ENCODE measurements at regions of chr17 and their contacts with region 1.

Region 1: DNA sequence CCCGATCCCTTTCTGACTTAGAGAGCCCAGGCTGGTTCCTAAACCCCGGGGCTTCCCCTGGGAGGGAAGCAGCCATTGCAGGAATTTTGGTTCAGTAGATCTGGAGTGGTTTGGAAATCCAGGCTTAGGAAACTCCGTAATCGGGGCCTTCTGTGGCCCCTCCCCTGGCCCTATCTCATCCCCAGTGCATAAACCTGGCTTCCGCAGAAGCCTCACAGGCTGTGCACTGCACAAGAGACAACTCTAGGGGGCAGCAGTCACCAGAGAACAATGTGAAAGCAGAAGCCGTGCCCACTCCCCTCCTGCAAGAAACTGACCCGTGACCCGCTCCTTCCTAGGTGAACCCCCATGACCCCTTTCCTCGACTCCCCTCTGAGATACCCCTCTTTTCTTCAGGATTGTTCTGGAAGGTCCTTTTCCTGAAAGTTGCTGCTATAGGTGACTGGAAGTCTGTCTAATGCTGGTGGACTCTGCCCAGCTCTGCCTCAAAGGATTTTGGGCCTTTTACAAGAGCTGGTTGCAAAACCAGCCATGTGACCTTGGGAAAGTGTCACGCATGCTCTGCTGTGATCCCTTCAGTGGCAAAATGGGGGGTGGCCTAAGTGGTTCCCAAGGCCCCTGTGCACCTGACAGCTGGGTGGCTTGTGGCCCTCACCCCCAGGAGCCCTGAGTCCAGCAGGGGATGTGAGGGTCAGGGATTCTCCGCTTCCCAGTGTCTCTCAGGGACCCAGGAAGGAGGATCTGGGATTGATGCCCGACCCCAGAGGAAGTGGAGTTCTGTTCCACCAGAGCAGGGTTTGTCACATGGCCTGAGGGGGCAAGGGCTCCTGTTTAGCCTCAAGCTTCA is 14.4 kb downstream of the GUCY2D start:
- DNase-seq: peak; percentile 80
- ATAC-seq: peak; percentile 91
- H3K4me3 Mint-ChIP-seq: peak overlapping the region; percentile 60
- H3K27ac Mint-ChIP-seq: no peak overlapping the region
- H3K4me1 Mint-ChIP-seq: peaks cover 5% of the 10 kb centered on the region
- H3K27me3 Mint-ChIP-seq: peaks cover 6% of the 10 kb centered on the region

Region 2: GRCh38 chr17:7951143-7951803 is 65.6 kb before region 1 on chr17:
- CTCF ChIA-PET with region 1: no interaction called
- POLR2A ChIA-PET with region 1: no interaction called
- intact Hi-C with region 1: no loop called
- DNase-seq: peak; percentile 71
- ATAC-seq: peak; percentile 97
- H3K4me3 Mint-ChIP-seq: peak overlapping the region; percentile 4
- H3K27ac Mint-ChIP-seq: peak overlapping the region; percentile 83
- H3K4me1 Mint-ChIP-seq: peaks cover 22% of the 10 kb centered on the region
- H3K27me3 Mint-ChIP-seq: no peaks in the 10 kb centered on the region

Region 3: DNA sequence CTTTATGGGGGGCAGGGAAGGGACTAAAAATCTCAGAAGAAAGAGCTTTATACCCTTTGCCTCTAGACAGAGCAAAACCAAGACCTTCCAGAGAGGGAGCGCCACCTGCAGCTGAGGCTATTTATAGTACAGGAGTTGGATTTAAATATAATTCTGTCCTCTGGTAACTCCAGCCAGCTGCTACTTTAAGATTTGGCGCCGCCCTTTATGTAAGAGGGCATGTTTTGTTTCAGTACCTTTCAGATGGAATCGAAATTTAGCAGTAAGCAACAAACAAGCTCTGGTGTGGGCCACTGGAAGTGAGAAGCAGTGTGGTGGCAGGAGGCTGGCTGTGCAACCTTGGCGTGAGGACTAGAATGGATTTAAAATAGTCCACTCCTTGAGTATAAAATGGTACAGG is 19.7 kb before region 1 on chr17:
- CTCF ChIA-PET with region 1: interaction called, 12 read pairs
- POLR2A ChIA-PET with region 1: no interaction called
- intact Hi-C with region 1: no loop called
- DNase-seq: peak; percentile 75
- ATAC-seq: peak; percentile 82
- H3K4me3 Mint-ChIP-seq: no peak overlapping the region
- H3K27ac Mint-ChIP-seq: no peak overlapping the region
- H3K4me1 Mint-ChIP-seq: peaks cover 6% of the 10 kb centered on the region
- H3K27me3 Mint-ChIP-seq: peaks cover 21% of the 10 kb centered on the region

Region 4: GRCh38 chr17:8031261-8031661 is 14.4 kb after region 1 on chr17:
- CTCF ChIA-PET with region 1: interaction called, 10 read pairs
- POLR2A ChIA-PET with region 1: no interaction called
- intact Hi-C with region 1: no loop called
- DNase-seq: no peak
- ATAC-seq: no peak
- H3K4me3 Mint-ChIP-seq: no peak overlapping the region
- H3K27ac Mint-ChIP-seq: no peak overlapping the region
- H3K4me1 Mint-ChIP-seq: no peaks in the 10 kb centered on the region
- H3K27me3 Mint-ChIP-seq: peaks cover 22% of the 10 kb centered on the region

Measured in activated CD4-positive, alpha-beta T cell treated with anti-CD3 and anti-CD28 coated beads for 36 hours (primary cell).